Sigmoid colon (tissue), 7 donors: ENCODE measurements at regions of chr10 and their contacts with region 1.

Region 1: DNA sequence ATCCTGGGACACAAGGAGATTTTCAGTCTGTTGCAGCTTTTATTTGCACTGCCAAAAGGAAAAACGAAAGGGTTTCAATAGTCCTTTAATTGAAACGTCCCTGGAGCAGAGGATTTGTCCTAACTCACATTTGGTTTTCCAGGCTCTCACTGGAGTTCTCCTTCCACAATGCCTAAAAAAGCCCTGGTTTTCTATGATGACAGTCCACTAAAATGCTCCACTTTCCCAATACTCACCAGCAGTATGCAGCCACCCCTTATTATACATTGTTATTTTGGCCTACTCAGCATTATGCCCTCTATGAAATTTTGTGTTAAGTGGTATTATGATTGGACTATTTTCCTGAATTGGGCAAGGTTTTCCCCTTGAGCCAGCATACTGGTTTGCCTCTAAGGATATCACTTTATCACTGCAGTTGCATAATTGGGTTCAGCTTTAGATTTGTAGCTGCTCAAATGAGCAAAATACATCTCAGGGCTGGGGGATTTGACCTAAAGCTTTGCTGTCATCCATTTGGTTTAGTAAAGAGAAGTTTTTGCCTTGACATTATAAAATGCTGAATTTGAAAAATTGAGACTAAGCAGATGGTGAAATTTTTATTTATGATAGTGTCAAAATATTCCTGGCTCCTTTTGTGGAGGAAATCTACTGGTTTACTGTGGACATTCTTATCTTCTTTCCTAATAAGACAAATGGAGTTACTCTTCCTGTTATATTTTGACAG is 239.2 kb downstream of the RNLS start:
- DNase-seq: no peak
- H3K4me3 ChIP-seq: no peak overlapping the region
- H3K27ac ChIP-seq: peak overlapping the region; percentile 18 to 46 (median 34)
- H3K4me1 ChIP-seq: peaks cover 0 to 17% (median 8%) of the 10 kb centered on the region in 4 donors
- H3K27me3 ChIP-seq: no peaks in the 10 kb centered on the region
- CTCF ChIP-seq: no peak
- EP300 ChIP-seq: no peak
- POLR2A ChIP-seq: no peak

Region 2: GRCh38 chr10:87952612-87953011 is 391.3 kb before region 1 on chr10:
- intact Hi-C with region 1: no loop called
- DNase-seq: no peak
- H3K4me3 ChIP-seq: no peak overlapping the region
- H3K27ac ChIP-seq: no peak overlapping the region
- H3K4me1 ChIP-seq: no peaks in the 10 kb centered on the region
- H3K27me3 ChIP-seq: no peaks in the 10 kb centered on the region
- CTCF ChIP-seq: no peak
- EP300 ChIP-seq: no peak
- POLR2A ChIP-seq: no peak

Region 3: GRCh38 chr10:88254091-88254490 is 89.8 kb before region 1 on chr10:
- intact Hi-C with region 1: loop called (anchors 10 kb)
- DNase-seq: no peak
- H3K4me3 ChIP-seq: no peak overlapping the region
- H3K27ac ChIP-seq: no peak overlapping the region
- H3K4me1 ChIP-seq: peaks cover 0 to 10% (median 0%) of the 10 kb centered on the region in 4 donors
- H3K27me3 ChIP-seq: no peaks in the 10 kb centered on the region
- CTCF ChIP-seq: no peak
- EP300 ChIP-seq: no peak
- POLR2A ChIP-seq: no peak